Activated T-helper 2 cell treated with anti-CD3 and anti-CD28 coated beads, Interferon-gamma antibody, Interleukin-2, Interleukin-4, amounts not matched to agents 10 μg/mL and 5 μg/mL and 100 μg/mL, durations not matched to agents 14 hours and 24 hours and 36 hours (primary cell): ENCODE measurements at regions of chrX and their contacts with region 1.

Region 1: DNA sequence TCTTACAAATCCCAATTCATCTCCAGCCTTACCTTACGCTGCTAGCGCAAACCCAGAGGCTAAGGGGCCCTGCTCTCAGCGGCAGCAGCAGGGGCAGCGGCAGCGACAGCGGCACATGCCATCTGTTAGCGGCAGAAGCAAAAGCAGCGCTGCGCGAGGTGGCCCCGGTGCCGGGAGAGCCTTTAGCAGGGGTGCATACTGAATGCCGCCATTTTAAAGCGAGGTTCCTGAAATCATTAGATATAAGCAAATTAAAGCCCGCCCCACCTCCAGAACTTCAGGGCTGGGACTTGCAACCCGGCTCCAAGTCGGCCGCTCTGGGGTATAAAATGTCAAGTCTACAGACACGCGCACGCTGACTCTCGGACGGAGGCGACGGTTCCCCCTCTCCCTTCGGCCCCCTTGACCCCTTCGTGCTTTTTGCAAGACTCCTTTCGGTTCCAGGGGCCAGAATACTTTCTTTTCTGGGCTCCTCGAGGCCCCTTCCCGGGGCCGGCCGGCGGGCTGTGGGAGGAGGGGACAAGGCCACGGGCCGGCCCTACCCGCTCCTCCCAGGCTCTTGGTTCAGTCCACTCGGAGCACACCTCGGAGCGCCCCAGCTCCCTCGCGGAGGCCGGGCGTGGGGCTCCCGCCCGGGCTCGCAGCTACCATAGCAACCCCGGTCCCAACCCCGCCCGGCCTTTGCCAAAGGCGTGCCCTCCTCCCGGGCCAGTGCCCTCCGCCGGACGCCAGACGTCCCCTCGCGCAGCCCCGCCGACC is at the start of gene MBNL3:
- DNase-seq: peak; percentile 45
- H3K4me3 Mint-ChIP-seq: peak within 1 kb of the TSS; percentile 94
- H3K27ac Mint-ChIP-seq: peak within 1 kb of the TSS; percentile 95
- H3K4me1 Mint-ChIP-seq: peaks cover 22% of the 10 kb centered on the region
- H3K27me3 Mint-ChIP-seq: no peaks in the 10 kb centered on the region
- total RNA-seq, gene MBNL3: 15.7 and 16.2 TPM in 2 replicates

Region 2: GRCh38 chrX:132292793-132293192 is 196.2 kb before region 1 on chrX:
- intact Hi-C with region 1: loop called (anchors 10 kb)
- DNase-seq: peak; percentile 8
- H3K4me3 Mint-ChIP-seq: no peak overlapping the region
- H3K27ac Mint-ChIP-seq: no peak overlapping the region
- H3K4me1 Mint-ChIP-seq: no peaks in the 10 kb centered on the region
- H3K27me3 Mint-ChIP-seq: peaks cover 4% of the 10 kb centered on the region

Region 3: GRCh38 chrX:132393992-132394391 is 95.0 kb before region 1 on chrX:
- intact Hi-C with region 1: no loop called
- DNase-seq: no peak
- H3K4me3 Mint-ChIP-seq: no peak overlapping the region
- H3K27ac Mint-ChIP-seq: no peak overlapping the region
- H3K4me1 Mint-ChIP-seq: no peaks in the 10 kb centered on the region
- H3K27me3 Mint-ChIP-seq: no peaks in the 10 kb centered on the region

Region 4: GRCh38 chrX:132615391-132616131 is 126.6 kb after region 1 on chrX:
- intact Hi-C with region 1: loop called (anchors 10 kb)
- DNase-seq: peak; percentile 9
- H3K4me3 Mint-ChIP-seq: no peak overlapping the region
- H3K27ac Mint-ChIP-seq: no peak overlapping the region
- H3K4me1 Mint-ChIP-seq: no peaks in the 10 kb centered on the region
- H3K27me3 Mint-ChIP-seq: peaks cover 4% of the 10 kb centered on the region

Region 5: DNA sequence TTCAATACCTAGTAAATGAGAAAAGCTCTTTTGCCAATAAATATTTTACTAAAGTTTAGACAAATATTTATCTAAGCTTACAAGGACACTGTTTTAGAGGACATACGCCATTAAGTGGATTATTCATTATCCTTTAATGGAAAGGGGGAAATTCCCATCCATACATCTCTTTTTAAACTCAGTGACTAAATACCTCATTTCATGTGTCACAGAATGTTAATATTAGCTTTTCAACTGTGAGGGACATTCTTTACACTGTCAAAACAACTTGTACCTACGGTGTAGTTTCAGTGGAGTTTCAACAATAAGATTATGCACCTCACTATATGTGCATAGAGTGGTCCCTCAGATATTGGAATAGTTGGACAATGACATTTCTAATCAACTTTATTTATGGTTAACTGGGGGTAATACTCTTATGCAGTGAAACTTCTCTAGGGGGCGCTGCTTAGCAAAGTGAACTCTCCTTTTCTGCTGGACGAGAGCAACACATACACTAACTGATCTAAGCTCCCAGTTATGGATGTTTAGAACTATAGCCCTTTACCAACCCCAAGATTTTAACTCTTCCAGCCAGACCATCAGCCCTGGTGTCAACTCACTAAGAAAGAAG is 459.8 kb after region 1 on chrX:
- intact Hi-C with region 1: no loop called
- DNase-seq: no peak
- H3K4me3 Mint-ChIP-seq: no peak overlapping the region
- H3K27ac Mint-ChIP-seq: no peak overlapping the region
- H3K4me1 Mint-ChIP-seq: no peaks in the 10 kb centered on the region
- H3K27me3 Mint-ChIP-seq: peaks cover 10% of the 10 kb centered on the region

Region 6: DNA sequence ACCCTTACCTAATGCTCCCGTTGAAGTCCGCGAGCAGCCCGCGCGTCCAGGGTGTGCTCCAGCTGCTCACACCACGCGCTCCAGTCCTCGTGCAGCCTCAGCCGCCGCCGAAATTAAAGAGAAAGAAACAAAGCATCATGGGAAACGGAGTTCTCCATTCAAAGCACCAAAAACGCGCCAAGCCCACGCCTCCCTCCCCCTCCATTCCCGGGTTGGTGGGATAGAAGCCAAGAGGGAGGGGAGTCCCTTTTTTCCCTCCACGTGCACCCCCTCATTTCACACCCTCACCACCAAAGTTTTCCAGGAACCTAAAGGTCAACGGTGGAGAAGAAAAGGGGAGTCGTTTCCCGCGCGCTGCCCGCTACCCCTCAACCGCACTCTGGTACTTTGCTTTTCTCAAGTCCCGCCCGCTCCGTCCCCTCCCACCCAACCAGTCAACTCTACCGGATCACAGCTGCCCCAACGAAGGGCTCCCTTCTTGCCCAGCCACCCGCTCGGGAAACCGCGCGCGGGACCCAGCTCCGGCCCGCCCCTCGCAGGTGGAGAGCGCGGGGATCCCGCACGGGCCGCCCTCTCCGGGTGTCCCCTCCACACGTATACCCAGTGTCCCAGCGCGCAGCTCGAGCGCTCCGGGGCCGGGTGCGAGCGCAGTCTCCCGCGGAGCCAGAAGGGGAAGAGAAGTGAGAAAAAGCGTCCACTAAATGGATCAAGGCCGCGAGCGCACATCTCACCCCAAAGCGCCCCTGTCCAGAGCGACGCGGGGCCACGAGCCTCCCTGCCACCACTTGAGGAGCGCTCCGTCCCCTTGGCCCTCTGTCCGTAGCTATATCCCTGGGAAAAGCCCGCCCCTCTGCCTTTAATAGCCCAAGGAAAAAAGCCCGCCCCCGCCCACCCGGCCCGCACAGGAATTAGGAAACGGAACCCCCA is 1682.9 kb after region 1 on chrX:
- intact Hi-C with region 1: loop called (anchors 10 kb)
- DNase-seq: peak; percentile 42
- H3K4me3 Mint-ChIP-seq: peak overlapping the region; percentile 96
- H3K27ac Mint-ChIP-seq: peak overlapping the region; percentile 97
- H3K4me1 Mint-ChIP-seq: peaks cover 31% of the 10 kb centered on the region
- H3K27me3 Mint-ChIP-seq: peaks cover 2% of the 10 kb centered on the region